Right ventricle myocardium inferior (tissue), 1 donor: ENCODE measurements at regions of chr4 and their contacts with region 1.

Region 1: GRCh38 chr4:85790582-85790981 is 315.6 kb downstream of the ARHGAP24 start:
- DNase-seq: no peak
- ATAC-seq: no peak

Region 2: DNA sequence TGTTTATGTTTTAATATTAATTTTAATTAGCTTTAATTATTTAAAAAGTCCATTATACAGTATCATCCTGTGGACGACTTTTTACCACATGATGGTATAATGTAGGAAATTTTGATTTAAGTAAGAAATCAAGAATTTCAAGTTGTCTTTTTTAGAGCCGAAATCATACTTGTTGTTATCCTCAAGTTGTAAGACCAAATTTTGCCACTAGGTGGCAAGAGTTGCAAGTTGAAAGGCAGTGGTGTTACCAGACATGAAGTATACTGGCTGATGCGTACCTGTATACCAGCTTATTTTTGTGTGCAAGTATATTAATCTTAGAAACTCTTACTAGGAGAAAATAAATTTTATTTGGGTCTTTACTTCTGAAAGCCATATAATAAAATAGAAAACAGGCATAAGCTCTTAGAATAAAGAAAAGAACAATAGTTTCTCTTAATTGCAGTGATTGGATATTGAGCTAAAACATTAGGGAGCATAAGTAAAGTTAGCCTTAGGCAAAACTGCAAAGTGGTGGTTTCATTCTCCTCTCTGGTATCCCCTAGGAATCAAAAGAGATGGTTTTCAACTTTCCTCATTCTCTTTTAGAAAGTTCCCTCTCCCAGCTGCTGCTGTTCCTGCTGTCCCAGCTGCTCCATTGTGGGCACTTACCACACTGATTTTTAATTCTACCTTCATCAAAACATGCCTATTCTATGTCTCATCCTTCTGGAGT is 706.0 kb before region 1 on chr4:
- intact Hi-C with region 1: loop called (anchors 10 kb)
- DNase-seq: no peak
- ATAC-seq: no peak

Region 3: GRCh38 chr4:85953651-85954018 is 163.1 kb after region 1 on chr4:
- intact Hi-C with region 1: no loop called
- DNase-seq: no peak
- ATAC-seq: no peak